Activated CD4-positive, alpha-beta T cell treated with anti-CD3 and anti-CD28 coated beads, Interleukin-2, amount 10 ng/mL, durations not matched to agents 24 days and 14 days (primary cell): ENCODE measurements at regions of chr1 and their contacts with region 1.

Region 1: GRCh38 chr1:109910123-109910962 is at the start of gene CSF1:
- DNase-seq: peak; percentile 91
- H3K4me3 Mint-ChIP-seq: peak within 1 kb of the TSS; percentile 100
- H3K27ac Mint-ChIP-seq: peak within 1 kb of the TSS; percentile 97
- H3K4me1 Mint-ChIP-seq: peaks cover 82% of the 10 kb centered on the region
- H3K27me3 Mint-ChIP-seq: no peaks in the 10 kb centered on the region
- total RNA-seq, gene CSF1: 190 and 193 TPM in 2 replicates

Region 2: DNA sequence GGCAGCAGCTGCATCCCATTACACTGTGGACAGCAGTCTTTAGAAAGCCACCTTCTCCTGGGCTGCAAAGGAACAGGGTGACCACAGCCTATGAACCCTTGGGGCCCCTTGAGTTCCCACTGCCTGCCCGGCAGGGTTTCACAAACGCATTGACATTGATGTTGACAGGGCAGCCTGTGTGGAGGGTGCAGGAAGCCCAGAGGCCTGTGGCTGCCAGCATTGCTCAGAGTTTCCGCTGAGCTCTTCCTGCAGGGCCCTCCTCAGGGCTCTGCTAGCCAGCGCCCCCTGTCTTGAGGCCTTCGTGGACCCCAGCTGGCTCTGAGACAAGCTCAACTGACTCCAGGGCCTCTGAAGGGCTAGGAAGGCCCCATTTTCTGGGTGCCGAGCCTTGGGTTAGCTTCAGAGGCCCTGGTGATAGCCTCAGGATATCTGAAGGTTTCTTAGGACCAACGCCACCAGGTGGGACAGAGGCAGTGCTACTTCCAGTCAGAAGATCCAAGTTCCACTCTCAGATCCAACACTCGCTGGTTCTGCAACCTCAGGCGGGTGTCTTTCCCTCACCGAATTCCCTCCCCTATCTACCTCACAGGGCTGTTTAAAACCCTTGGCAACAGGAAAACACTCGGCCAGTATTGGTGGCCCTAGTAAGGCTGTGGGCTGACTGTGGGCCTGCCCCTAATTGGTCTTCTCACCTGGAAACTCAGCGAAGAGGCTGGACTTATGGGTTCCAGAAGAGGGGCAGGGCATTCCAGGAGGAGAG is 119.4 kb before region 1 on chr1:
- intact Hi-C with region 1: loop called (anchors 1 kb)
- DNase-seq: peak; percentile 94
- H3K4me3 Mint-ChIP-seq: peak overlapping the region; percentile 53
- H3K27ac Mint-ChIP-seq: peak overlapping the region; percentile 95
- H3K4me1 Mint-ChIP-seq: peaks cover 66% of the 10 kb centered on the region
- H3K27me3 Mint-ChIP-seq: no peaks in the 10 kb centered on the region

Region 3: DNA sequence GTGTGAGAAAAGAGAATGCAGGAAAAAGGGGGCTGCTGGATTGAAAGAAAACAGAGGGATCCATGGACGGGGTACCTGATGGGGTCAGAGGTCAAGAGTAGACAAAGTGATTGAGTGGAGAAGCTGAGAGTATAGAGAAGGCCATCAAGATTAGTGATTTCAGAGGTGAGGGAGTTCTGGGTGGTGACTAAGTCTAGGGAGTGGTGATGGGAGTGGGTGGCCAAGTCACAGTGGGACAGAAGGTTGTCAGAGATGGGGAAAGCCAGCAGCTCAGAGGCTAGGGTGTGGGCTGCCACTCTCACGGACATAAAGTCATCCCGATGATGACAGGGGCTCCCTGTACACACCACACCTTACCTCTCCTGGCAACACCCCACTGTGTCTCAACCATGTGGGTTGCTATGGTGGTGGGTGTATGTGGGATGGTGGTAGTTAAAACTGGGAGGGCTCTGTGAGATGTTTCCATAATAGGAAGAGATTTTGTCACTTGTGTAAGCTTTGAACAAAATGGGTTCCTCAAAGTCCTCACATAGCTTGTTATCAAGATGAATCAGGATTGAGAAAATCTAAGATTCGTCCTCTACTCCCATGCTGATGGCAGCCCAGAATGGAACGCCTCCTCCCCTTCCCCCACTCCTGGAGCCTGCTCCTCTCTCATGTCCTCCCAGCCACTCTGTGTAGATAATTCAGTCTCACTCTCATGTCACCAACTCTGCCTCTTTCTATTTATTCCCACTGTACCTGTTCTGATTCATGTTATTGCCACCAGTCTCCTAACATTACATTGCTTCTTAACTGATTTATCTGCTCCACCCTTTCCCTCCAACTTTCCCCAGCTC is 20.0 kb before region 1 on chr1:
- intact Hi-C with region 1: loop called (anchors 1 kb)
- DNase-seq: no peak
- H3K4me3 Mint-ChIP-seq: peak overlapping the region; percentile 18
- H3K27ac Mint-ChIP-seq: peak overlapping the region; percentile 90
- H3K4me1 Mint-ChIP-seq: peaks cover 36% of the 10 kb centered on the region
- H3K27me3 Mint-ChIP-seq: no peaks in the 10 kb centered on the region

Region 4: GRCh38 chr1:109984456-109985275 is 74.3 kb after region 1 on chr1 and contains the start of gene AHCYL1:
- intact Hi-C with region 1: loop called (anchors 2 kb)
- DNase-seq: peak; percentile 100
- H3K4me3 Mint-ChIP-seq: peak within 1 kb of the TSS; percentile 99
- H3K27ac Mint-ChIP-seq: peak within 1 kb of the TSS; percentile 97
- H3K4me1 Mint-ChIP-seq: peaks cover 37% of the 10 kb centered on the region
- H3K27me3 Mint-ChIP-seq: peaks cover 1% of the 10 kb centered on the region
- total RNA-seq, gene AHCYL1: 67.1 and 75.3 TPM in 2 replicates